ENCODE measurements at regions of chr16 and their contacts with region 1.

Region 1: DNA sequence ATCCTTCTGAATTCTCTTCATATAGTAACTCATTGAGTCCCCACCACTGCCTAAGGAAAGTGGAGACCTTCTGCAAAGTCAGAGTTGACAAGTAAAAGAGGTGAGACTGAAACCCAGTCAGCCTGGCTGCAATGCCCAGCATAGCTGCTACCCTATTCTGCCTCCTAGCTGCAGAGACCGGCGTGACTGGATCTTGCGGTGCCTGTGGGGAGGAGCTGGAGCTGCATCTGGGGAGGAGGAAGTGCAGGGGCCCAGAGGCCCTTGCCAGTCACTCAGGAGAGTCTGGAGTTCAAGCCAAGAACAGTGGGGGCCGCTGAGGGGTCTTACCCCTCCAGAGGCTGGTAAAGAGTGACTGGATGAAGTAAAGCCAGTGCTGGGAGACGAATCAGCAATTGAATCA is 35.0 kb upstream of the ZNF423 start:
- DNase-seq: peak; percentile 77
- ATAC-seq: peak; percentile 98
- H3K4me3 Mint-ChIP-seq: no peak overlapping the region
- H3K27ac Mint-ChIP-seq: no peak overlapping the region
- H3K4me1 Mint-ChIP-seq: no peaks in the 10 kb centered on the region; the same call in 1 of the 2 replicates
- H3K27me3 Mint-ChIP-seq: no peaks in the 10 kb centered on the region
- CTCF ChIP-seq: peak; percentile 44; the same call in 1 of the 2 replicates

Region 2: DNA sequence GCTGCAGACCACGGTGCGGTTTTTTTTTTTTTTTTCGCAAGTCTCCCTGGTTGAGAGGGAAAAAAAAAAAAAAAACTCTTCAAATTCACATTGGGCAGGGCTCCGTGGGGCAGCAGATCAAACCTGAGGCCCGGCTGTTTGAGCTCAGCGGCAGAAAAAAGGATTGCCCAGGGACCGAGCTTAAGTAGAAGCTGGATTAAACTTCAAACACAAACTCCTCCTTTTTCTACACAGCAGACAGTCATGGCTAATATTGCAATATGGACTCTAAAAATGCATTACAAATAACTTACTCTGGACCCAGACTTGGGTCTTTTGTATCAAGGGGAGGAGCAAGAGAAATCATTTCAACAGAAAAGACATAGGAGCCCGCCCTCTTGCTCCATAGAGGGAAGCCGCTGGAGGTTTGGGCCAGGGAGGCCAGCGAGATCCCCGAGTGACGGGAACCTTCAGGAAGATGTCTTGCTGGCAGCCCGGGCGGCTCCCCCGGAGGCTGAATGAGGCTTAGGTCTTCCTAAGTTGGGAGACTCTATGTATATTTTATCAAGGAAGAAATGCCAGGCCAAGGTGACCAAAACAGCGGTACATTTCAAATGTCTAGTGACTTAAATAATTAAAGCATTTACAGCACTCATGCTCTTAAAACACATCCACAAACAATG is 202.7 kb before region 1 on chr16:
- CTCF ChIA-PET with region 1: no interaction called
- POLR2A ChIA-PET with region 1: interaction called, 10 read pairs
- DNase-seq: peak; percentile 54
- ATAC-seq: peak; percentile 71
- H3K4me3 Mint-ChIP-seq: no peak overlapping the region
- H3K27ac Mint-ChIP-seq: no peak overlapping the region
- H3K4me1 Mint-ChIP-seq: peaks cover 20% of the 10 kb centered on the region
- H3K27me3 Mint-ChIP-seq: no peaks in the 10 kb centered on the region
- CTCF ChIP-seq: no peak

Region 3: DNA sequence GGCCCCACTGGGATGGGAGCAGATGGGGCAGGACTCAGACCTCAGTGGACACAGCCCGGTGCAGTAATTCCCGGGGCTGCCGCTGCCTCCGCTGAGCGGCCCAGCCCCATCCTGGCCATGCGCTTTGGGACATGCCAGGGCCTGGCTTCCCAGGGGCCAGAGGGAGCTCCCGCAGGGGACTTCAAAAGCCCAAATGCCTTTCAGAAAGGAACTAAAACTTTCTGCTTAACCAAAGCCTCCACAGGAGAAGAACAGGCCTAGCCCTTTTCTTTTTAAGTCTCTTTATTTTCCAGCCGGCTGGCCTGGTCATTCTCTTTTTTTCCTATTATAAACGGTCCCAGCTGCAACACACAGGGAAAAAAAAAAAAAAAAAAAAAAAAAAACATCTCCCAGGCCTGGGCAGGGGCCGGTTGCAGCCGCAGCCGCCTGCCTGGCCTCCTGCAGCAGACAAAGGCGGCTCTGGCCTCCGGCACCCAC is 24.2 kb before region 1 on chr16:
- CTCF ChIA-PET with region 1: interaction called, 13 read pairs
- POLR2A ChIA-PET with region 1: no interaction called
- DNase-seq: peak; percentile 58
- ATAC-seq: peak; percentile 93
- H3K4me3 Mint-ChIP-seq: no peak overlapping the region
- H3K27ac Mint-ChIP-seq: no peak overlapping the region
- H3K4me1 Mint-ChIP-seq: peaks cover 17% of the 10 kb centered on the region
- H3K27me3 Mint-ChIP-seq: peaks cover 7% of the 10 kb centered on the region
- CTCF ChIP-seq: no peak

Region 4: DNA sequence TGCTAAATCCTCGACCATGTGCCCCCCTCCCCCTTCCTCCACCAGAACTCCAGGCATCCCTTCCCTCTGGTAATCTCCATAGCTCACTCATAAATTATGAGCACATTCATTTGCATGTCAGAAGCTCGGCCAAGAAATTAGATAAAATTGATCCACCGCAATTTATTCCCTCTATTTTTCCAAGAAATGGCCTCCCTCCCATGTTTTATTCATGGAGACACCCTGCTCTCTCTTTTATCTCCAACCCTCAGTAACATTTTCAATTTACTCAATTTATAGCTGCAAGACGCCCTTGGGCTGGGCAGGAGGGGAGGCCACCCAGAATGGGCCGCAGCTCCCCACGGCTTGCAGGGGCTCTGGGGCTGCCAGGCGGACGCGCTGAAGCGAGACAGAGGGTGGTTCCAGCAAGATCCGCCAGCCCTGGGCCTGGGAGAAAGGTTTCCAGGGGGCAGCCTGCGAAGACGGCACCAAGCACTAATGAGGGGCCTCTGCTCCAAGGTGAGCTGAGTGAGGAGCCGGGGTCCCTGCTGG is 19.7 kb after region 1 on chr16:
- CTCF ChIA-PET with region 1: interaction called, 15 read pairs
- POLR2A ChIA-PET with region 1: no interaction called
- DNase-seq: no peak
- ATAC-seq: no peak
- H3K4me3 Mint-ChIP-seq: no peak overlapping the region
- H3K27ac Mint-ChIP-seq: no peak overlapping the region
- H3K4me1 Mint-ChIP-seq: peaks cover 5% of the 10 kb centered on the region; the same call in 1 of the 2 replicates
- H3K27me3 Mint-ChIP-seq: no peaks in the 10 kb centered on the region; the same call in 1 of the 2 replicates
- CTCF ChIP-seq: no peak

Region 5: GRCh38 chr16:49937886-49938285 is 47.0 kb after region 1 on chr16:
- CTCF ChIA-PET with region 1: no interaction called
- POLR2A ChIA-PET with region 1: no interaction called
- DNase-seq: no peak
- ATAC-seq: no peak
- H3K4me3 Mint-ChIP-seq: no peak overlapping the region
- H3K27ac Mint-ChIP-seq: no peak overlapping the region
- H3K4me1 Mint-ChIP-seq: no peaks in the 10 kb centered on the region
- H3K27me3 Mint-ChIP-seq: peaks cover 8% of the 10 kb centered on the region
- CTCF ChIP-seq: no peak

Region 6: DNA sequence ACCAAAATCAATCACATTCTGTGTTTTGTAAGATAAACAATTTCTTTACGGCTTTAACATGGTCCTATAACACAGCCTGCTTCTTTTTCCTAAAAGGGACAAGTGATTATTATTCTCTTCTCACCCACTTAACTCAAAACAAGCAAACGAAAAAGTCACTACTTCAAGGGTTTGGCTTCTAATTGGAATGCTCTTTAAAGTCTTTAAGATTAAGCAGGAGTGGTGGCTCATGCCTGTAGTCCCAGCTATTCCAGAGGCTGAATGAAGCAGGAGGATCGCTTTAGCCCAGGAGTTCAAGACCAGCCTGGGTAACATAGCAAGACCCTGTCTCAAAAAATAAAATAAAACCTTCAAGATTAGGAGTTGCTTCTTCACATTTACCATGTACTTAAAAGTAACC is 67.6 kb after region 1 on chr16:
- CTCF ChIA-PET with region 1: interaction called, 10 read pairs
- POLR2A ChIA-PET with region 1: no interaction called
- DNase-seq: no peak
- ATAC-seq: no peak
- H3K4me3 Mint-ChIP-seq: no peak overlapping the region
- H3K27ac Mint-ChIP-seq: no peak overlapping the region
- H3K4me1 Mint-ChIP-seq: no peaks in the 10 kb centered on the region; the same call in 1 of the 2 replicates
- H3K27me3 Mint-ChIP-seq: no peaks in the 10 kb centered on the region
- CTCF ChIP-seq: no peak

Region 7: GRCh38 chr16:50059111-50059510 is 168.2 kb after region 1 on chr16:
- CTCF ChIA-PET with region 1: no interaction called
- POLR2A ChIA-PET with region 1: no interaction called
- DNase-seq: no peak
- ATAC-seq: no peak
- H3K4me3 Mint-ChIP-seq: no peak overlapping the region
- H3K27ac Mint-ChIP-seq: no peak overlapping the region
- H3K4me1 Mint-ChIP-seq: no peaks in the 10 kb centered on the region
- H3K27me3 Mint-ChIP-seq: peaks cover 4% of the 10 kb centered on the region
- CTCF ChIP-seq: no peak

Region 8: GRCh38 chr16:50227120-50227519 is 336.2 kb after region 1 on chr16:
- CTCF ChIA-PET with region 1: no interaction called
- POLR2A ChIA-PET with region 1: no interaction called
- DNase-seq: no peak
- ATAC-seq: no peak
- H3K4me3 Mint-ChIP-seq: no peak overlapping the region
- H3K27ac Mint-ChIP-seq: no peak overlapping the region
- H3K4me1 Mint-ChIP-seq: no peaks in the 10 kb centered on the region
- H3K27me3 Mint-ChIP-seq: no peaks in the 10 kb centered on the region
- CTCF ChIP-seq: no peak

Measured in WTC11 (cell line).